ENCODE measurements at regions of chr15 and their contacts with region 1.

Region 1: GRCh38 chr15:88663141-88663585 is 24.3 kb downstream of the ISG20 start:
- DNase-seq: no peak
- H3K4me3 ChIP-seq: no peak overlapping the region
- H3K27ac ChIP-seq: no peak overlapping the region
- H3K27me3 ChIP-seq: no peaks in the 10 kb centered on the region
- CTCF ChIP-seq: no peak

Region 2: DNA sequence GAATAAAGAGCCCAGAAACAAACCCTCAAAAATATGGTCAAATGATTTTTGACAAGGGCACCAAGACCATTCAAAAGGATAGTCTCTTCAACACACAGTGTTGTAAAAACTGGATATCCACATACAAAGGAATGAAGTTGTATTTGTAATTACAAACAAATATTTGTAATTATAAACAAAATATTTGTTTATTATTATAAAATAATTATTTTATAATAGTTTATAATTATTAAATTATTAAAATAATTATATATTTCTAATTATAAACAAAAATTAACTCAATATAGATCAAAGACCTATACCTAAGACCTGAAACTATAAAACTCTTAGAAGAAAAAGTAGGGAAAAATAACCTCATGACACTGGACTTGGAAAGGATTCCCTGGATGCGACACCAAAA is 116.8 kb after region 1 on chr15:
- CTCF ChIA-PET with region 1: no interaction called
- POLR2A ChIA-PET with region 1: interaction called, 15 read pairs
- DNase-seq: no peak
- H3K4me3 ChIP-seq: no peak overlapping the region
- H3K27ac ChIP-seq: no peak overlapping the region
- H3K27me3 ChIP-seq: peaks cover 3% of the 10 kb centered on the region
- CTCF ChIP-seq: no peak

Region 3: DNA sequence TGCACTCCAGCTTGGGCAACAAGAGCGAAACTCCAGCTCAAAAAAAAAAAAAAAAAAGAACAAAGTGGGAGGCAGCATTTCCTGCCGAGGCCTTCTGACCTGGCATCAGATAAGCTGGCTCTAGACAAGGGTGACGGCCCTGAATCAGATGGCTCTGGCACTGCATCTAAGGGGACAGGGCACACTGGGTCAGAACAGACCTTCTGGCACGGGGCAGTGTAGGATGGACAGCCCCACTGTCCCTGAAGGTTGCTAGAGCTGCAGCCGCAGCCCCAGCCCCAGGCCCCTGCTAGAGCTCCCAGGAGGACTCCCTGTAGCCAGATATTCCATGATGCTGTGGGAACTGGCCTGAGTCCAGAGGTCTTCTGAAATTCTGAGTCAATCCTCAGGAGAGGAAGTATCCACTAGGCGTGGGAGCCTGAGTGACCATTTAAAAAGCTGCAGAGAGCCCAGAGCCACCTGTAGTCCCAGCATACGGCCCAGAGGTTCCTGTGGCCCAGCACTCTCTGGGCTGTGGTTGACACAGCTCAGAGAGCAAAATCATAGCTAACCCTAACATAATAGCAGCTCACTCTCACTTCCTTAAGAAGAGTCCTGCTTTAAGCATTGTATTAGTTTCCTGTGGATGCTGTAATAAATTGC is 319.3 kb after region 1 on chr15:
- CTCF ChIA-PET with region 1: no interaction called
- POLR2A ChIA-PET with region 1: no interaction called
- DNase-seq: no peak
- H3K4me3 ChIP-seq: no peak overlapping the region
- H3K27ac ChIP-seq: no peak overlapping the region
- H3K27me3 ChIP-seq: no peaks in the 10 kb centered on the region
- CTCF ChIP-seq: no peak

Measured in AG04450 (cell line).